Activated CD4-positive, alpha-beta T cell treated with anti-CD3 and anti-CD28 coated beads for 36 hours (primary cell): ENCODE measurements at regions of chr17 and their contacts with region 1.

Region 1: DNA sequence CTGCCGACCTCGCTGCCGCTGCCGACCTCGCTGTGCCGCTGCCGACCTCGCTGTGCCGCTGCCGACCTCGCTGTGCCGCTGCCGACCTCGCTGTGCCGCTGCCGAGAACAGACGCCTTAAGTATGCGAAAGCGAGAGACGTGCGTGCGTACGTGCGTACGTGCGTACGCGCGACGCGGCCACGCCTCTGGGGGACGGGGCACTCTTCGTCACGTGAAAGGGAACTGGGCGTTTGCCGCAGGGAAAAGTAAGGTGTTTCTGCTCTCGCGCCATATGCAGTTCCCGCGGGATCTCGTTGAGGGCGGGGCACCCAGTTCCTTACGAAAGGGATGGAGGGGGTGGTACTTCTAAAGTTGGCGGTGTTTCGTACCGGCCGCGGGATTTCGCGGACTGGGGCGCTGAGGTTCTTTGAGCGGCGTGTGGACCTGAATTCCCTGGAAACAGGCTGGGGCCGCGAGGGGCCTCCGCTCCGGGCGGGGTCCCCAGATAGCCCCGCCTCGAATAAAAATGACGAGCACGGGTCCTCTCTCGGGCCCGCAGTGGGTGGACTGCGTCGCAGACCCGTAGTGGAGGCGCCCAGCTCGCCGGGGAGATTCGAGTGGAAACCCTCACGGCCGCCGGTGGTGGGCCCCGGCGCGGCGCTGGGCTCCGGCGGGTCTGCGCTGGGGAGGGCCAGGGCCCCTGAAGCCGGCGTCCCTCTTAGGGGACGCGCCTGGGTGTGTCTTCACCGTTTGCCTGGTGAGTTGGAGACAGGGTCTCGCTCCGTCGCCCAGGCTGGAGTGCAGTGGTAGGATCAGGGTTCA is at the start of gene EIF4A3:
- DNase-seq: peak; percentile 99
- ATAC-seq: peak; percentile 91
- H3K4me3 Mint-ChIP-seq: peak within 1 kb of the TSS; percentile 77
- H3K27ac Mint-ChIP-seq: peak within 1 kb of the TSS; percentile 93
- H3K4me1 Mint-ChIP-seq: peaks cover 43% of the 10 kb centered on the region
- H3K27me3 Mint-ChIP-seq: no peaks in the 10 kb centered on the region
- total RNA-seq, gene EIF4A3: 103 to 141 TPM

Region 2: DNA sequence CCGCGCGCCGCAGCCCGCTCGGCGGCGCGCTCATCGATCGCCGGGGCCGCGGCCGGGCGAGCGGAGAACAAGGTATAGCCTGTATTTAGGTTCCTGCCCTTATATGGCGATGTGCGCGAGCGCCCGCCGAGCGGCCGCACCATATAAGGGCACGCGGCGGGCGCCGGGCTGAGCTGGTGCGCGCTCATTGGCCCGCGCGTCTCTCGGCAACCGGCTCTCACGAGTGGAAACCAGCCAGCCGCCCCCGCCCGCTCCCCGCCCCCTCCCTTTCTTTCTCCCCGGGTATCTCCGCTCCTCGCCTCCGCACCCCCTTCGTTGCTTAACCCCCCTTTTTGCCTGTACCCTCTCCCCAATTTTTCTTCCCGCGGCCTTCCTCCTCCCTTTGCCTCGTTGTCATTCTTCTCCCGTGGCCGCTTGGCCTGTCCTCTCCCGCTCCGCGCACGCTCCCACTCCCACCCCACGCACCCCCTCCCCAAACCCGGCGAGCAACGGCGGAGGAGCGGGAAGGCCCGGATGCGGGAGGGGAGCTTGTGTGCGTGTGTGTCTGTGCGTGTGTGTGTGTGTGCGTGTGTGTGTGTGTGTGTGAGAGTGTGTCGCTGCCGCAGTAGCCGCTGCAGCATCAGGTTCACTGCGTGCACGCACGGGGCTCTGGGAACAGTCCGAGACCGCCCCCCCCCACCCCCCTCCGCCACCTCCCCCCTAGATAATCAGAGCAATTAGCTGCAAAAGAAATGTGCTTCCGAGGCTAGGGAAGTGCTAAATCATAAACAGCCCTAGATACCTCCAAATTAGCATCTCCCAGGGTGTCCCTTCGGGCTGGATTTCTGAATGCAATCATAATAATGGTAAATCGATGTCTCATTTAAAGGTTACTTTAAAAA is 336.9 kb before region 1 on chr17:
- CTCF ChIA-PET with region 1: no interaction called
- POLR2A ChIA-PET with region 1: no interaction called
- intact Hi-C with region 1: loop called in 1 of 2 experiments (anchors 1 kb)
- DNase-seq: peak; percentile 90
- ATAC-seq: peak; percentile 90
- H3K4me3 Mint-ChIP-seq: peak overlapping the region; percentile 18
- H3K27ac Mint-ChIP-seq: no peak overlapping the region
- H3K4me1 Mint-ChIP-seq: peaks cover 39% of the 10 kb centered on the region
- H3K27me3 Mint-ChIP-seq: peaks cover 59% of the 10 kb centered on the region

Region 3: GRCh38 chr17:80035943-80036714 is 111.1 kb before region 1 on chr17 and contains the start of gene CCDC40:
- CTCF ChIA-PET with region 1: interaction called, 3 read pairs
- POLR2A ChIA-PET with region 1: no interaction called
- intact Hi-C with region 1: loop called in 1 of 2 experiments (anchors 1 kb)
- DNase-seq: peak; percentile 82
- ATAC-seq: peak; percentile 72
- H3K4me3 Mint-ChIP-seq: peak within 1 kb of the TSS; percentile 82
- H3K27ac Mint-ChIP-seq: no peak within 1 kb of the TSS
- H3K4me1 Mint-ChIP-seq: peaks cover 7% of the 10 kb centered on the region
- H3K27me3 Mint-ChIP-seq: peaks cover 12% of the 10 kb centered on the region
- total RNA-seq, gene CCDC40: 0.56 to 0.57 TPM

Region 4: GRCh38 chr17:80219013-80219762 is 72.0 kb after region 1 on chr17:
- CTCF ChIA-PET with region 1: no interaction called
- POLR2A ChIA-PET with region 1: interaction called, 5 read pairs
- intact Hi-C with region 1: loop called in 1 of 2 experiments (anchors 1 kb)
- DNase-seq: peak; percentile 95
- ATAC-seq: peak; percentile 87
- H3K4me3 Mint-ChIP-seq: peak overlapping the region; percentile 89
- H3K27ac Mint-ChIP-seq: peak overlapping the region; percentile 92
- H3K4me1 Mint-ChIP-seq: peaks cover 27% of the 10 kb centered on the region
- H3K27me3 Mint-ChIP-seq: no peaks in the 10 kb centered on the region

Region 5: GRCh38 chr17:80243526-80244433 is 96.5 kb after region 1 on chr17:
- CTCF ChIA-PET with region 1: no interaction called
- POLR2A ChIA-PET with region 1: no interaction called
- intact Hi-C with region 1: no loop called
- DNase-seq: no peak
- ATAC-seq: no peak
- H3K4me3 Mint-ChIP-seq: no peak overlapping the region
- H3K27ac Mint-ChIP-seq: no peak overlapping the region
- H3K4me1 Mint-ChIP-seq: no peaks in the 10 kb centered on the region
- H3K27me3 Mint-ChIP-seq: no peaks in the 10 kb centered on the region

Region 6: DNA sequence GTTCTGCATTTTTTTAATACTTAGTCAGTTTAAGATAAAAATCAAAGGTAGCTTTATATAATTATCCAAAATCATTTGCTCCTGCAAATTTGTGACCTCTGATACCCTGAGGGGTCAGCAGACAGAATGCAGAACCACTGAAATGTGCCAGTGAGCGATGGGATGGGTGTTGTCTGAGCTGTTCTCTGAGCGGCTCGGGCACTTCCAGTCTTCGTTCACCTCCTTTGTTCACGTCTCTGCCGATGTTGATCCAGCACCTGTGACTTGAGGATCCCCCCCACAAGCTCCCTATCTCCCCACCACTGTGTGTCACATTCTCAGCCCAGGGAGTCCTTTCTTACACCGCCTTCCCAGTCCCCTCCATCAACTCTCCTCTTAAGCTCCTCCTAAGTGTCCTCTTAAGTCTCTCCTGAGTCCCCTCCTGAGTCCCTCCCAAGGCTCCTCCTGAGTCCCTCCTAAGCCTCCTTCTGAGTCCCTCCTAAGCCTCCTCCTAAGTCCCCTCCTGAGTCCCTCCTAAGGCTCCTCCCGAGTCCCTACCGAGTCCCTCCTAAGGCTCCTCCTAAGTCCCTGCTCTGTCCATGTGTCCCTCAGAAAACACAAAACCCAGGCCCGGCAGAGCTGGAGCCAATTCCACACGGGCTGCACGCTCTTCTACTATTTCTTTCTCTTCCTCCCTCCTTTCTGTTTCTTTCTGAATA is 160.9 kb after region 1 on chr17:
- CTCF ChIA-PET with region 1: no interaction called
- POLR2A ChIA-PET with region 1: no interaction called
- intact Hi-C with region 1: no loop called
- DNase-seq: no peak
- ATAC-seq: no peak
- H3K4me3 Mint-ChIP-seq: no peak overlapping the region
- H3K27ac Mint-ChIP-seq: peak overlapping the region; percentile 84
- H3K4me1 Mint-ChIP-seq: peaks cover 12% of the 10 kb centered on the region
- H3K27me3 Mint-ChIP-seq: no peaks in the 10 kb centered on the region

Region 7: GRCh38 chr17:80414803-80415625 is 267.8 kb after region 1 on chr17 and contains the start of gene ENDOV:
- CTCF ChIA-PET with region 1: no interaction called
- POLR2A ChIA-PET with region 1: no interaction called
- intact Hi-C with region 1: loop called in 1 of 2 experiments (anchors 1 kb)
- DNase-seq: peak; percentile 95
- ATAC-seq: peak; percentile 96
- H3K4me3 Mint-ChIP-seq: peak within 1 kb of the TSS; percentile 81
- H3K27ac Mint-ChIP-seq: peak within 1 kb of the TSS; percentile 8
- H3K4me1 Mint-ChIP-seq: peaks cover 23% of the 10 kb centered on the region
- H3K27me3 Mint-ChIP-seq: peaks cover 16% of the 10 kb centered on the region
- total RNA-seq, gene ENDOV: 12.3 to 13.0 TPM